SK-N-SH (cell line): ENCODE measurements at regions of chr2 and their contacts with region 1.

Region 1: DNA sequence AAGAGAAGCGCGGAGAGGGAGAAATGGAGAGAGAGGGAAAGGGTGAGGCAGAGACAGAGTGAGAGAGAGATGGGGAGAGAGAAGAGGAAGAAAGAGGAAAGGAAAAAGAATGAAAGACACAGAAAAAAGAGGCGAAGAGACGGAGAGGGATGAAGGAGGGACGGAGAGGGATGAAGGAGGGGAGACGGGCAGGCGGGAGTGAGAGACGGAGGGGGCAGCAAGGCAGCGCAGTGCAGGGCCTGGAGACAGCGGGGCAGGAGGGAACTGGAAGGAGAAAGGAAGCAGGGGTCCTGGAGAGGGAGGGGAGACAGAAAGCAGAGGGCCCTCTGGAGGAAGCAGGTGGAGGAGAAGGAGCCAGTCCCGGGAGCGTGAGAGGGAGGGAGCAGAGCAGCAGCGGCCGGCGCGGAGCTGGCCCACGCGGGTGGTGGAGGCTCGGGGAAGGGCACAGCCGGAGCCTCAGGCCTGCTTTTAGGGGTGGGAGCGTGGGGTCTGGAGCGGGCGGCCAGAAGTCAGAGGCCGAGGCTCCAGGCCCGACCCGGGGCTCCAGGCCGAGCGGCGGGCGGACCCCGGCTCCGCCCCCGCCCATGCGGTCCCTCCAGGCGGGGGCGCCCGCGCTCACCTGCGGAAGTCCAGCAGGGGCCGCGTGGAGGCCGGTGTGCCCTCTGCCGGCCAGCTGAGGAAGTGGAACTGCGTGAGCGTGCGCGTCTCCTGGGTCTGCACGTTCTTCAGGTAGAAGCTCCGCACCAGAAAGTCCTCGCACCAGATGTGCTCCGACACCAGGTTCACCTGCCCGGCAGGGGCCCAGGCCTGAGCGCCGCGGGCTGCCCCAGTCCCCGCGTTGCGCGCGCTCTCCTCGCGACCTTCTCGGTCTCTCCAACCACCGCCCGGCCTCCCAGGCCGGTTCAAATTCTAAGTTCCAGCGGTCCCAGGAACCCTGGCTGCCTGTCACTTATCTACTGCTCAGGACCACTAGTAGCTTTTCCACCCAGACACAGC is 14.5 kb downstream of the PTPRN start:
- DNase-seq: peak; percentile 100
- H3K4me3 ChIP-seq: peak overlapping the region; percentile 37 to 51; a peak in 3 of 4 replicates
- H3K27ac ChIP-seq: peak overlapping the region in 1 of 2 experiments; percentile 18; a peak in 1 of 4 replicates
- H3K4me1 ChIP-seq: peaks cover under 1 to 8% of the 10 kb centered on the region in 2 experiments; a peak in 1 of 4 replicates
- H3K27me3 ChIP-seq: no peaks in the 10 kb centered on the region
- CTCF ChIP-seq: peak; percentile 84
- EP300 ChIP-seq: no peak
- RAD21 ChIP-seq: peak; percentile 72

Region 2: GRCh38 chr2:219073413-219074129 is 221.1 kb before region 1 on chr2:
- CTCF ChIA-PET with region 1: no interaction called
- POLR2A ChIA-PET with region 1: no interaction called
- DNase-seq: peak; percentile 68
- H3K4me3 ChIP-seq: no peak overlapping the region
- H3K27ac ChIP-seq: no peak overlapping the region
- H3K4me1 ChIP-seq: no peaks in the 10 kb centered on the region
- H3K27me3 ChIP-seq: no peaks in the 10 kb centered on the region
- CTCF ChIP-seq: peak; percentile 63
- EP300 ChIP-seq: no peak
- RAD21 ChIP-seq: peak; percentile 59

Region 3: DNA sequence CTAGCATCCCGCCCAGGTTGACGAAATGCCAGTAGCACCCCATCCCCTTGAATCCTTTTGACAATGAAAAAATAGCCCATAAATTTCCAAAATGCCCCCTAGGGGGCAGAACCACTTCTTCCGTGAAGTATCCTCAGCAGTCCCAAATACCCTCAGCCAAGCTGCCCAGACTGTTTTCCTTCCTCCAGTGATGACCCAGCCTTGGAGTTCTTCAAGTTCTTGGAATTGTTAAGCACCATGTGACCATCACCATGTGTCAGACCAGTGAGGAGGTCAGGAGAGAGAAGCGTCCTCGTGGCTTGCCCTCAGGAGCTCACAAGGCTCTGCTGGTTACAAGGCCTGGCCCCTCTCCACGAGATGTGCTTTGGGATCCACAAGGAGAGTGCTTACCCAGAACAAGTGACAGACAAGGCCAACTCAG is 123.4 kb before region 1 on chr2:
- CTCF ChIA-PET with region 1: interaction called, 87 read pairs
- POLR2A ChIA-PET with region 1: interaction called, 4 read pairs
- DNase-seq: peak; percentile 73
- H3K4me3 ChIP-seq: no peak overlapping the region; a peak in 1 of 4 replicates
- H3K27ac ChIP-seq: peak overlapping the region; percentile 4 to 5; a peak in 2 of 4 replicates
- H3K4me1 ChIP-seq: peaks cover 0 to 8% of the 10 kb centered on the region in 2 experiments; a peak in 2 of 4 replicates
- H3K27me3 ChIP-seq: no peaks in the 10 kb centered on the region
- CTCF ChIP-seq: peak; percentile 81
- EP300 ChIP-seq: no peak
- RAD21 ChIP-seq: peak; percentile 62

Region 4: GRCh38 chr2:219245148-219245898 is 49.3 kb before region 1 on chr2 and contains the starts of genes GLB1L and STK16:
- CTCF ChIA-PET with region 1: interaction called, 20 read pairs
- POLR2A ChIA-PET with region 1: interaction called, 7 read pairs
- DNase-seq: peak; percentile 98
- H3K4me3 ChIP-seq: peak within 1 kb of the TSS; percentile 84 to 97
- H3K27ac ChIP-seq: peak within 1 kb of the TSS; percentile 78 to 92
- H3K4me1 ChIP-seq: peaks cover 15 to 26% of the 10 kb centered on the region in 2 experiments
- H3K27me3 ChIP-seq: no peaks in the 10 kb centered on the region
- CTCF ChIP-seq: no peak
- EP300 ChIP-seq: no peak
- RAD21 ChIP-seq: peak; percentile 3; the same call in 1 of the 2 replicates
- polyA plus RNA-seq, gene GLB1L: 11.7 and 14.1 TPM in 2 replicates
- polyA plus RNA-seq, gene STK16: 57.6 and 78.6 TPM in 2 replicates

Region 5: GRCh38 chr2:219269362-219270054 is 25.1 kb before region 1 on chr2:
- CTCF ChIA-PET with region 1: interaction called, 312 read pairs
- POLR2A ChIA-PET with region 1: no interaction called
- DNase-seq: peak; percentile 58
- H3K4me3 ChIP-seq: no peak overlapping the region
- H3K27ac ChIP-seq: peak overlapping the region in 1 of 2 experiments; percentile 53; a peak in 1 of 4 replicates
- H3K4me1 ChIP-seq: peaks cover 7 to 14% of the 10 kb centered on the region in 2 experiments; a peak in 3 of 4 replicates
- H3K27me3 ChIP-seq: no peaks in the 10 kb centered on the region; the same call in 1 of the 2 replicates
- CTCF ChIP-seq: no peak
- EP300 ChIP-seq: no peak
- RAD21 ChIP-seq: no peak

Region 6: DNA sequence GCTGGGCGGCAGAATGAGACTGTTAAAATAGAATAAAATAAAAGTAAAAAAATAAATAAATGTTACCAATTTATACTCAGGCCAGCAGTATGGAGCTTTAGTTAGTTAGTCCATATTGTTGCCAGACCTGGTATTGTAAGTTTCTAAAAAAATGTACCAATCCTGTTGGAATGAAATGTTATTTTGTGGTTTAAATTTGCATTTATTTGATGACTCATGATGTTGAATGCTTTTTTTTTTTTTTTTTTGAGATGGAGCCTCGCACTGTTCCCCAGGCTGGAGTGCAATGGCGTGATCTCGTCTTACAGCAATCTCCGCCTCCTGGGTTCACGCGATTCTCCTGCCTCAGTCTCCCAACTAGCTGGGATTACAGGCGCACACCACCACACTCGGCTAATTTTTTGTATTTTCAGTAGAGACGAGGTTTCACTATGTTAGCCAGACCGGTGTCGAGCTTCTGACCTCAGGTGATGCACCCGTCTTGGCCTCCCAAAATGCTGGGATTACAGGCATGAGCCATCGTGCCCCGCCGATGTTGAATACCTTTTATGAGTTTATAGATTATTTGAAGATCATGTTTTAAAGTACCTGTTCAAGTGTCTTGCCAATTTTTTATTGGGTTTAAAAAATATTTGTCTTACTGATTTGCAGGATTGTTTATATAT is 20.3 kb after region 1 on chr2:
- CTCF ChIA-PET with region 1: interaction called, 42 read pairs
- POLR2A ChIA-PET with region 1: interaction called, 4 read pairs
- DNase-seq: no peak
- H3K4me3 ChIP-seq: no peak overlapping the region
- H3K27ac ChIP-seq: no peak overlapping the region
- H3K4me1 ChIP-seq: no peaks in the 10 kb centered on the region
- H3K27me3 ChIP-seq: no peaks in the 10 kb centered on the region
- CTCF ChIP-seq: no peak
- EP300 ChIP-seq: no peak
- RAD21 ChIP-seq: no peak

Region 7: DNA sequence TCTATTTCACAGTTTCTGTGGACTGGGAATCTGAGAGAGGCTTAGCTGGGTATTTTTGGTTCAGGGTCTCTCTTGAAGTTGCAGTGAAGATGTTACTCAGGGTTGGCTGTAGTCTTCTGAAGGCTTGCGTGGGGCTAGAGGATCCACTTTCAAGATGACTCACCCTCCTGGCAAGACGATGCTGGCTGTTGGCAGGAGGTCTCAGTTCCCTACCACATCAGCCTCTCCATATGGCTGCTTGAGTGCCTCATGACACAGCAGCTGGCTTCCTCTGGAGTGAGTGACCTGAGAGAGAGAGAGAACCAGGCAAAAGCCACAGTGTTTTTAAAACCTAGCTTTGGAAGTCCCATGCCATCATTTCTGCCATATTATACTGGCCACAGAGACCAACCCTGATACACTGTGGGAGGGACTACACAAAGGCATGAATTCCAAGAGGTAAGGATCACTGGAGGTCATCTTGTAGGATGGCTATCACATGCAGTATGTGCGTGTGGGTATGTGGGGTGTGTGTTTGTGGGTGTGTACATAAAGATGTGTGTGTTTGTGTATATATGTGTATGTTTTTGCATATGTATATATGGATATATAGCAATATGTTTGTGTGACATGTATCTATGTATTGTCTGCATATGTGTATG is 68.0 kb after region 1 on chr2:
- CTCF ChIA-PET with region 1: interaction called, 19 read pairs
- POLR2A ChIA-PET with region 1: no interaction called
- DNase-seq: no peak
- H3K4me3 ChIP-seq: no peak overlapping the region
- H3K27ac ChIP-seq: peak overlapping the region in 1 of 2 experiments; percentile 55; a peak in 2 of 4 replicates
- H3K4me1 ChIP-seq: peaks cover 4 to 9% of the 10 kb centered on the region in 2 experiments; a peak in 2 of 4 replicates
- H3K27me3 ChIP-seq: peaks cover 18% of the 10 kb centered on the region
- CTCF ChIP-seq: no peak
- EP300 ChIP-seq: peak in 1 of 2 experiments; percentile 55; a peak in 1 of 4 replicates
- RAD21 ChIP-seq: no peak